ENCODE measurements at regions of chr17 and their contacts with region 1.

Region 1: DNA sequence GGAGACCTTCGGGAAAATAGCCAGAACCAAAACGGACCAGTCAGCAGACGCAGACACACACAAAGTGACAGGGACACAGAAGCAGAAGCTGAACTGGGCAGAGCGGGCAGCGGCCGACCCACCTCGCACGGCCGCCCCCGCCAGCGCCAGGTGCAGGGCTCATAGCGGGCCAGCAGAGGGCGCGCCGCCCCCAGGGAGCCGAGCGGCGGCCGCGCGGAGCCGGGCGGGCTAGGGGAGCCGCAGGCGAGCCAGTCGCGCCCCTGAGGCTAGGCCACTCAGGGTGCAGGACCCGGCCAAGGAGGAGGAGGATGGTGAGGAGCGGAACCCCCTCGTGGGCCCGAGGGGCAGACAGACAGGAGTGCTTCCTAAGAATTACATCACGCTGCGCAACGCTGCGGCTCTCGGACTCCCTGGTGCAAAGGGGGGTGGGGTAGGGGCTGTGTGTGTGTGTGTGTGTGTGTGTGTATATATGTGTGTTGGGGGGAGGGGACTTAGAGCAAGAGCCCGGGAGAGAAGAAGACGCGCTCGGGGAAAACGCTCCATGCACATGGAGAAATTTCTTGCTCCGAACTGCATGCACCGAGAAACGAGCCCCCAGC is 913 bp upstream of the NOG start:
- DNase-seq: peak in 1 of 2 donors; percentile 22
- H3K4me3 ChIP-seq: peak overlapping the region; percentile 46 to 73 (median 62)
- H3K27ac ChIP-seq: no peak overlapping the region
- H3K4me1 ChIP-seq: peaks cover 11% of the 10 kb centered on the region in 2 donors
- H3K27me3 ChIP-seq: peaks cover 0 to 36% of the 10 kb centered on the region in 2 donors
- CTCF ChIP-seq: peak in 2 of 3 donors; percentile 40 to 92
- POLR2A ChIP-seq: no peak

Region 2: GRCh38 chr17:56715613-56716357 is 123.2 kb after region 1 on chr17:
- intact Hi-C with region 1: loop called (anchors 5 kb)
- DNase-seq: peak; percentile 76 to 83
- H3K4me3 ChIP-seq: no peak overlapping the region
- H3K27ac ChIP-seq: no peak overlapping the region
- H3K4me1 ChIP-seq: no peaks in the 10 kb centered on the region
- H3K27me3 ChIP-seq: no peaks in the 10 kb centered on the region
- CTCF ChIP-seq: peak; percentile 24 to 87 (median 82)
- POLR2A ChIP-seq: no peak

Measured in breast epithelium (tissue), 4 donors.